WTC11 (cell line): ENCODE measurements at regions of chr1 and their contacts with region 1.

Region 1: GRCh38 chr1:27097484-27097917 is 57.4 kb downstream of the SLC9A1 start:
- DNase-seq: peak; percentile 84
- ATAC-seq: peak; percentile 68
- H3K4me3 Mint-ChIP-seq: no peak overlapping the region
- H3K27ac Mint-ChIP-seq: no peak overlapping the region
- H3K4me1 Mint-ChIP-seq: peaks cover 27% of the 10 kb centered on the region
- H3K27me3 Mint-ChIP-seq: no peaks in the 10 kb centered on the region; the same call in 1 of the 2 replicates
- CTCF ChIP-seq: peak; percentile 99

Region 2: DNA sequence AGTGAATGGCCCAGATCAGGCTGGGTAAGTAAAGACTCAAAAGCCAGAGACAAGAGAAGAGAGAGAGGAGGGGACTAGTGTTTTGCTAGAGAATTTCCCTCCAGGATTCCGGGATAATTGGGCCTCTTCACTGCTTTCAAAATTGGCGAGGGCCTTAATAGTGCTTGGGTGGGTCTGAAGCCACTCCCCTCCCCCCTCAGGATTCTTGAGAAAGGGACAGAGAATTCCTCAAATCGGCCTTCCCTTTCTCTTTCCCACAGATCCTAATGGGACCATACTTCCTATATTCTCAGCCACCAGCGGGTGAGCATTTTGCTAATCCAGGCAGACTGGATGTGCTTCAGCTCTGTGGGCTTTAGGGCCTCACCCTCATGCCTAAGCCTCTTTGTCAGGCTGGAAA is 222.6 kb before region 1 on chr1:
- CTCF ChIA-PET with region 1: no interaction called
- POLR2A ChIA-PET with region 1: no interaction called
- DNase-seq: no peak
- ATAC-seq: peak; percentile 30; the same call in 1 of the 2 replicates
- H3K4me3 Mint-ChIP-seq: no peak overlapping the region
- H3K27ac Mint-ChIP-seq: peak overlapping the region; percentile 82; the same call in 1 of the 2 replicates
- H3K4me1 Mint-ChIP-seq: peaks cover 8% of the 10 kb centered on the region
- H3K27me3 Mint-ChIP-seq: no peaks in the 10 kb centered on the region
- CTCF ChIP-seq: no peak

Region 3: DNA sequence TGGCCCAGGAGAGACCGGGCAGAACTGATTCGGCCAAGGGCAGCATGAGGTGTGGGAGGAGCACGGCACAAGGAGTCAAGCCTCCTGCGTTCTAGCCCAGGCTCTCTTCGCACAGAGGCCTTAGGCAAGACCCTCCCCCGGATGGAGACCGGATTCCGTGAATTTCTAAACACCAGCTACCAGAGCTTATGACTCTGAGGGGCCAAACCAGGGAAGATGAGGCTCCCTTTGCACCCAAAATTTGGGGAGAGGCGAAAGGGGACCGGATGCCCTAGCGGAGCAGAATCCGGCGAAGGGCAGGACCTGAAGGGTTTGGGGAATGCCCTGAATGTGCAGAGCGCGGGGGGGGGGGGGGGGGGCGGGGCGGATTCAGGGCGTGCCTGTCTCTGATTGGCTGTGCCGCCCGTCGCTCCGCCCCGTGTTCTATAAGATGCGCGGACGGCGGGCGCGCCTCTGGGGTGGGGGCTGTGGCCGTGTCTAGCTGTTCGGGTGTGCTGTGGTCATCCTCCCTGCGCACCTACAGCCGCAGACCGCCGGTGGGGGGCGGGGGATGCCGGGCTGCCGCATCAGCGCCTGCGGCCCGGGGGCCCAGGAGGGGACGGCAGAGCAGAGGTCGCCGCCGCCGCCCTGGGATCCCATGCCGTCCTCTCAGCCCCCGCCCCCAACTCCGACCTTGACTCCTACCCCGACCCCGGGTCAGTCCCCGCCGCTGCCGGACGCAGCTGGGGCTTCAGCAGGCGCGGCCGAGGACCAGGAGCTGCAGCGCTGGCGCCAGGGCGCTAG is 104.1 kb before region 1 on chr1 and contains the start of gene TRNP1:
- CTCF ChIA-PET with region 1: interaction called, 21 read pairs
- POLR2A ChIA-PET with region 1: no interaction called
- DNase-seq: peak; percentile 86
- ATAC-seq: peak; percentile 58
- H3K4me3 Mint-ChIP-seq: peak within 1 kb of the TSS; percentile 81
- H3K27ac Mint-ChIP-seq: peak within 1 kb of the TSS; percentile 97
- H3K4me1 Mint-ChIP-seq: peaks cover 57% of the 10 kb centered on the region
- H3K27me3 Mint-ChIP-seq: peaks cover 26% of the 10 kb centered on the region
- CTCF ChIP-seq: no peak
- total RNA-seq, gene TRNP1: 37.6 to 51.4 TPM (median 49.4 TPM) in 3 replicates

Region 4: DNA sequence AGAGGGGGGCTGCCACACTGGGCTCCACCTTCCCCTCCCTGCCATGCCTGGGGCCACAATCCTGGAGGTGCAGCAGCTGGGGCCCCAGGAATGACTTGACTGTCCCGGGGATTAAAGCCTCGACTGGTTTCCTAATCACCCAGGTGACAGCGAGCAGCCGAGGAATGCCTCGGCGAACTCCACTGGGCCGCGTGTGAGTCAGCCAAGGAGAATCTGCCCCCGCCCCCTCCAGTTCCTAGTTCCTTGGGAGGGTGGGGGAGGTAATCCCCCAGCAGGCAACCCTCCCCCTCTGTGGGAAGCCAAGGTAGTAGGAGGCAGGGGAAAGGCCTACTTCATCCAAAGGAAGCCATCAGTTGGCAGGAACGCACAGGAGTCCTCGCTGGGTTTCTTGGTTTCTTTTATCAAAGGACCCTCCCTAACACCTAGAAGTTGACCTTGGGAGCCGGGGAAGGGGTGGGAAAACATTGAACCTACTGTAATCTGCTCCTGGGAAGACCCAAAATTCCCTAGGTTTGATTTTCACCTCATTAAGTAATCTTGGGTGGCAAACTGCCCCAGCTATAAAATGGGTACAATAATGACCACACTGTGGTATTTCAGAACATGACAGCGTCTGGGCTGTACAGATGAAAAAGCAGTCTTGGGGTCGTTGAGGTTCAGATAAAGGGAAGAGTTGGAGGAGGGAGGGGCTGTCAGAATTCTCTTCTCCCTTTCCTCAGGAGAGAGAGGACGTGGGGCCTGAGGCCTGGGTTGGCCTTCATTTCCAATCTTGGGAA is 86.3 kb before region 1 on chr1:
- CTCF ChIA-PET with region 1: interaction called, 18 read pairs
- POLR2A ChIA-PET with region 1: interaction called, 3 read pairs
- DNase-seq: peak; percentile 92
- ATAC-seq: peak; percentile 16
- H3K4me3 Mint-ChIP-seq: peak overlapping the region; percentile 88
- H3K27ac Mint-ChIP-seq: peak overlapping the region; percentile 92
- H3K4me1 Mint-ChIP-seq: peaks cover 57% of the 10 kb centered on the region
- H3K27me3 Mint-ChIP-seq: no peaks in the 10 kb centered on the region
- CTCF ChIP-seq: no peak

Region 5: DNA sequence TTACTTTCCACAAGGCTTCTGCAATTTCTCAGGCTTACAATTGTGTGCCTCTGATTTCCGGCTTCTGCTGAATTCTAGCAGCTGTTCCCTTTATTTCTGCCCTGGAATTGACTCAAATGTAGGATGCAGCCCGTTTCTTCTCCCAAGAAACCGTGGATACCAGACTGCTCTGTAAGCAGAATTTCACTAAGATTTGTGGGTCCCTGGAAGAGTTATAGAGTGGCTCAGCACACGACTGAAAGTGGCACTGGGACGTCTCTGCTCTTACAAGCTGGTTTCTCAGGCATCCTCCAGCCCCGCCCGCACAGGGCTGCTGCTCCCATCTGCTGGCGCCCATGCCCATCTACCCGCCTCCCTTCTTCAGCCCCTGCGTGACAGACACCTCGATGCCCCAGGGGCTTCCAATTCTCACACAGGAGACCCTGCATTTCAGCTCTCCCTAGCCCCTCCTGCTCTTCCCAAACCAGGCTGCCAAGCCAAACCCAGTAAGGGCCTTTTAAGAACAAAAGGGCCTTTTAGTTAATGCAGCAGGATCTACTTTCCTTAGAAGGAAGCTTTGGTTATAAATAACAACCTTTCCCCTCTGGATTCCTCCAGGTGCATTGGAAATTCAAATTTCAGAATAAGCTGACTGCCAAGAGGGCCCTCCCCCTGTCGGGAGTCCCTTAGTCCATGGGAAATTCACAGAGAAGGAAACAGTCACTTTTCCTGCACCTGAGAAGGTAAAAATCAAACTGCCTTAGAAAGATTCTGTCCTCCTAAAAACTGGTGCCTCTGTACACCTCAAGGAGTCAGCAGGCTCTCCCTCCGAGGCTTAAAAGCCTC is 39.5 kb before region 1 on chr1:
- CTCF ChIA-PET with region 1: interaction called, 27 read pairs
- POLR2A ChIA-PET with region 1: no interaction called
- DNase-seq: peak; percentile 68
- ATAC-seq: peak; percentile 43
- H3K4me3 Mint-ChIP-seq: peak overlapping the region; percentile 61
- H3K27ac Mint-ChIP-seq: peak overlapping the region; percentile 98
- H3K4me1 Mint-ChIP-seq: peaks cover 45% of the 10 kb centered on the region
- H3K27me3 Mint-ChIP-seq: no peaks in the 10 kb centered on the region; the same call in 1 of the 2 replicates
- CTCF ChIP-seq: no peak

Region 6: DNA sequence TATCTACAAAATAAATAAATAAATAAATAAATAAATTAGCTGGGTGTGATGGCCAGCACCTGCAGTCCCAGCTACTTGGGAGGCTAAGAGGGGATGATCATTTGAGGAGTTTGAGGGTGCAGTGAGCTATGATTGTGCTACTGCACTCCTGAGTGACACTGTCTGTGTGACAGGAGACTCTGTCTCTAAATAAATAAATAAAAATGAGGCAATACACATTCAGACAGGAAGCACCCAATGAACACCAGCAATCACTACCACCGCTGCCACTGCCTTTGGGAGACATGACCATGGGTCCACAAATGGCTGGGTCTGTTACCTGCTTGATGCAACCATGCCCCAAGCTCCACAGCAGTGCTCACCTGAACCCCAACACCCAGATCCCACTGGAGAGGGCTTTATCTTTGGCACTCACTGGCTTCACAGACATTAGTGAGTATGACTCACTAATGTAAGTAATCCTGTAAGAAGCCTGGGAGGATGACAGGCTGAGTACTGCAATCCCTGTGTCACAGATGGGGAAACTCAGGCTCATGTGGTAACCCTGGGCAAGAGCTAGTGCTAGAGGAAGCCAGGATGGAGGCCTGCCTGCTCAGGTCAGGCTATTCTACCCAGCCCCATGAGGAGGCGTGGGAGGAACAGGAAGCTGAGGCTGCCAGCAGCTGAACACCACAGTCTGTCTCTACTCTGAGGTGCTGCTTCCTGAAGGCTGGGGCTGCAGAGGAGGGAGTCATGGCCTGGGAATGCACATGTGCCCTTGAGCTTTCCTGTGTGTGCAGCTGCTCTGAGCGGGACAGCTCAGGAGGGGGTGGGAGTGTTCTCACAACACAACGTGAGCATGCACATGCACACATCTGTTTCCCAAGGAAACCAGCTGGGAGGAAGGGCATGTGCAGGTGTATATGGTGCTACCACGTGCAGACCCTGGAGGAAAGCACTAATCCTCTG is 14.4 kb after region 1 on chr1:
- CTCF ChIA-PET with region 1: interaction called, 13 read pairs
- POLR2A ChIA-PET with region 1: no interaction called
- DNase-seq: no peak
- ATAC-seq: peak; percentile 63
- H3K4me3 Mint-ChIP-seq: no peak overlapping the region
- H3K27ac Mint-ChIP-seq: peak overlapping the region; percentile 74
- H3K4me1 Mint-ChIP-seq: peaks cover 7% of the 10 kb centered on the region
- H3K27me3 Mint-ChIP-seq: no peaks in the 10 kb centered on the region
- CTCF ChIP-seq: no peak

Region 7: GRCh38 chr1:27176323-27176722 is 78.8 kb after region 1 on chr1:
- CTCF ChIA-PET with region 1: no interaction called
- POLR2A ChIA-PET with region 1: no interaction called
- DNase-seq: no peak
- ATAC-seq: no peak
- H3K4me3 Mint-ChIP-seq: no peak overlapping the region
- H3K27ac Mint-ChIP-seq: no peak overlapping the region
- H3K4me1 Mint-ChIP-seq: no peaks in the 10 kb centered on the region
- H3K27me3 Mint-ChIP-seq: peaks cover 10% of the 10 kb centered on the region
- CTCF ChIP-seq: no peak